ENCODE measurements at regions of chr6 and their contacts with region 1.

Region 1: GRCh38 chr6:56693246-56693607 is 50.5 kb upstream of the DST start:
- DNase-seq: peak; percentile 91
- H3K4me3 Mint-ChIP-seq: peak overlapping the region; percentile 77
- H3K27ac Mint-ChIP-seq: peak overlapping the region; percentile 97
- H3K4me1 Mint-ChIP-seq: peaks cover 51% of the 10 kb centered on the region
- H3K27me3 Mint-ChIP-seq: no peaks in the 10 kb centered on the region
- CTCF ChIP-seq: no peak

Region 2: DNA sequence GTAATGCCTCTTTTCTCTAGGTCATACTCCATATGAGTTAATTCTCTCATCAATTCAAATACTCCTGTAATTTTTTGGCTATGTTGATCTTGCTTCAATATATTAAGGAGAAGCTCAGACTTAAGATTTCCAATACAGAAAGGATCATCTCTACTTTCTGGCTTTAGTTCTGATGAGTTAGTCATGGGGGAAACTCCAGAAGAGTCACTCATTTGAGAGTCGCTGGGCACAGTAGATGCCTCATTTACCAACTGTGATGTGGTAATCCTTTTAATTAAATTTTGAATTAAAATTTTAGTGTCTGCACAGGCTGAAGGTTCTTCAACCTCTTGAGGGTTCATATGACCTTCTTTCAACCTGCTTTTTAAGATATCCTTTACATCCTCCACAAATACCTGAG is 89.0 kb before region 1 on chr6:
- CTCF ChIA-PET with region 1: no interaction called
- POLR2A ChIA-PET with region 1: interaction called, 11 read pairs
- intact Hi-C with region 1: no loop called
- DNase-seq: no peak
- H3K4me3 Mint-ChIP-seq: no peak overlapping the region
- H3K27ac Mint-ChIP-seq: no peak overlapping the region
- H3K4me1 Mint-ChIP-seq: peaks cover 5% of the 10 kb centered on the region
- H3K27me3 Mint-ChIP-seq: no peaks in the 10 kb centered on the region
- CTCF ChIP-seq: no peak

Region 3: GRCh38 chr6:56652994-56653393 is 40.2 kb before region 1 on chr6:
- CTCF ChIA-PET with region 1: interaction called, 3 read pairs
- POLR2A ChIA-PET with region 1: interaction called, 395 read pairs
- intact Hi-C with region 1: no loop called
- DNase-seq: peak; percentile 81
- H3K4me3 Mint-ChIP-seq: peak overlapping the region; percentile 66
- H3K27ac Mint-ChIP-seq: peak overlapping the region; percentile 99
- H3K4me1 Mint-ChIP-seq: peaks cover 57% of the 10 kb centered on the region
- H3K27me3 Mint-ChIP-seq: no peaks in the 10 kb centered on the region
- CTCF ChIP-seq: no peak

Region 4: DNA sequence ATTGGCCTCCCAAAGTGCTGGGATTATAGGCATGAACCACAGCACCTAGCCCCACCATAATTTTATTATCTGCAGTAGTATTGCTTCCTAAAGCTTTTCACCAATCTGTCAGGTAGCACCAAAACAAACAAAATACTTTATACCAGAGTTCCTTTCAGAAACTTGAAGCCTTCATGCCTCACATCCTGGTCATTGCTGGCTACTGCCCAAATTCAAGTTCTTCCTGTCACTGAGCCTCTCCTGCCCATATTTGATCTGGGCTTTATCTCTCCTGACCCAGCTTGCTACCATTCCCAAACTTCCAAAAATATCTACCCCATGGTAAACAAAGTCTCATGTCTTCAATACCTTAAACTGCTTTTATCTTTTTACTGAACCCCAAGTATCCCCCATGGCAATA is 15.7 kb before region 1 on chr6:
- CTCF ChIA-PET with region 1: interaction called, 13 read pairs
- POLR2A ChIA-PET with region 1: interaction called, 395 read pairs
- intact Hi-C with region 1: no loop called
- DNase-seq: no peak
- H3K4me3 Mint-ChIP-seq: no peak overlapping the region
- H3K27ac Mint-ChIP-seq: no peak overlapping the region
- H3K4me1 Mint-ChIP-seq: no peaks in the 10 kb centered on the region
- H3K27me3 Mint-ChIP-seq: no peaks in the 10 kb centered on the region
- CTCF ChIP-seq: no peak

Region 5: DNA sequence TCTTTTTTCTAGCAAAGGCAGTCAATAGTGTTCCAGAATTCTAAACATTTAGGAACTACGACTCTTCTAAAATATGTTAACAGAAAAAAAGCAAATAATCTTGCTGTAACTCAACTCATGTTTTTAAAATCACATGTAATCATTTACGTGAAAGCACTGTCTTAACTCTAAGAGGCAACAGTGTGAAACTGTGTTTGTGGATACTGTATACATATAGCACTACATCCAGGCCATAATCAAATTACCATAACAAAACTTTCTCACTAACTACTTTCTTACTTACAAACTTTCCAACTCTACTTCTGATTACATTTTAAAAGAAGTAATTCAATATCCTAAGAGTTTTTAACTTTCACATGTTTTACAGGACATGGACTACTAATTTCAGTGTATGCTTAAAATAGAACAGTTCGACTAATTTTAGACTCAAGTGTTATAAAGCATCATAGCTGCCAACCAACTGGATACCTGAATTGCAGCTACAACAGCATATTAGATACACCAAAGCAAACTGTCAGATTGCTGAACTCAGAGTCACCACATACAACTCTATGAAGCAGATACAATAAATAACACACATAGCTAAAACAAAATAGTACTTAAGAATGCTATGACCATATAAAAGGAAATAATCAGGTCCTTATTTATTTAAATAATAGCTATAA is 140.0 kb after region 1 on chr6:
- CTCF ChIA-PET with region 1: no interaction called
- POLR2A ChIA-PET with region 1: no interaction called
- intact Hi-C with region 1: no loop called
- DNase-seq: no peak
- H3K4me3 Mint-ChIP-seq: no peak overlapping the region
- H3K27ac Mint-ChIP-seq: no peak overlapping the region
- H3K4me1 Mint-ChIP-seq: peaks cover 12% of the 10 kb centered on the region
- H3K27me3 Mint-ChIP-seq: no peaks in the 10 kb centered on the region
- CTCF ChIP-seq: no peak

Region 6: DNA sequence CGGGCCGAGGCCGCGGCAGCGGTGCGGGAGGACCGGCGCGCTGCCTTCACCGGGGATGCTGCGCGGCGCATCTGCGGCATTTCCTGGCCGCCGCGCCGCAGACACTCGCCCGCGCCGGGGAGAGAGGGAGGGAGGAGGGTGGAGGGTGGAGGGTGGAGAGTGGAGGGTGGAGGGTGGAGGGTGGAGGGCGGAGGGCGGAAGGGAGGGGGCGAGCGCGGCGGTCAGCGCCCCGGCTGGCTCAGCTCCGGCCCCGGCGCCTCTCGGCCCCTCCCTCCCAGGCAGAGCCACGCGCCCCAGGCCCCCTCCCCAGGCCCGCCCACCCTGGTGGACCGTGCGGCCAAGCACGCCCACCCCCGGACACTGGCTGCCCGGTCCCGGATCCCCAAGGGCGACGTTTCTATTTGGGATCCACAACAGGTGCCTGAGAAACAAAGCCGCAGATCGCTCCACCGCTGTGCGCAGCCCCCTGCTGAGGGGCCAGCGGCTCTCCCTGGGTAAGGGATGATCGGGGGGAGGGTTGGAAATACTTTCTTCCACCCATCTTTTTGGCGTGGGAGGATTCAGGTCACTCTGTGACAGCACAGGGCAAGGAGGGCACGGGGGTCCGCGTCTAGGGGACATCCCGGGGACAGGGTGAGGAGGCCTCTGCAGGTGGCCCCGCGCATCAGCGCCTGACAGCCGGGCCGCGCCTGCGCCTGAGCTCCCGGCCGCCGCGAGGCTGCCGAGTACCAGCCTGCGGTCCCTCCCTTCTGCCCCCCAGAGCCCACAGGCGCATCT is 150.5 kb after region 1 on chr6:
- CTCF ChIA-PET with region 1: interaction called, 4 read pairs
- POLR2A ChIA-PET with region 1: interaction called, 12 read pairs
- intact Hi-C with region 1: no loop called
- DNase-seq: peak; percentile 65
- H3K4me3 Mint-ChIP-seq: peak overlapping the region; percentile 92
- H3K27ac Mint-ChIP-seq: peak overlapping the region; percentile 88
- H3K4me1 Mint-ChIP-seq: peaks cover 16% of the 10 kb centered on the region
- H3K27me3 Mint-ChIP-seq: no peaks in the 10 kb centered on the region
- CTCF ChIP-seq: peak; percentile 33